ENCODE measurements at regions of chr17 and their contacts with region 1.

Region 1: GRCh38 chr17:7021993-7022778 is 664 bp upstream of the BCL6B start:
- DNase-seq: peak; percentile 87
- ATAC-seq: peak; percentile 77
- H3K4me3 Mint-ChIP-seq: peak overlapping the region; percentile 82
- H3K27ac Mint-ChIP-seq: peak overlapping the region; percentile 85
- H3K4me1 Mint-ChIP-seq: peaks cover 27% of the 10 kb centered on the region
- H3K27me3 Mint-ChIP-seq: no peaks in the 10 kb centered on the region
- CTCF ChIP-seq: peak; percentile 63

Region 2: DNA sequence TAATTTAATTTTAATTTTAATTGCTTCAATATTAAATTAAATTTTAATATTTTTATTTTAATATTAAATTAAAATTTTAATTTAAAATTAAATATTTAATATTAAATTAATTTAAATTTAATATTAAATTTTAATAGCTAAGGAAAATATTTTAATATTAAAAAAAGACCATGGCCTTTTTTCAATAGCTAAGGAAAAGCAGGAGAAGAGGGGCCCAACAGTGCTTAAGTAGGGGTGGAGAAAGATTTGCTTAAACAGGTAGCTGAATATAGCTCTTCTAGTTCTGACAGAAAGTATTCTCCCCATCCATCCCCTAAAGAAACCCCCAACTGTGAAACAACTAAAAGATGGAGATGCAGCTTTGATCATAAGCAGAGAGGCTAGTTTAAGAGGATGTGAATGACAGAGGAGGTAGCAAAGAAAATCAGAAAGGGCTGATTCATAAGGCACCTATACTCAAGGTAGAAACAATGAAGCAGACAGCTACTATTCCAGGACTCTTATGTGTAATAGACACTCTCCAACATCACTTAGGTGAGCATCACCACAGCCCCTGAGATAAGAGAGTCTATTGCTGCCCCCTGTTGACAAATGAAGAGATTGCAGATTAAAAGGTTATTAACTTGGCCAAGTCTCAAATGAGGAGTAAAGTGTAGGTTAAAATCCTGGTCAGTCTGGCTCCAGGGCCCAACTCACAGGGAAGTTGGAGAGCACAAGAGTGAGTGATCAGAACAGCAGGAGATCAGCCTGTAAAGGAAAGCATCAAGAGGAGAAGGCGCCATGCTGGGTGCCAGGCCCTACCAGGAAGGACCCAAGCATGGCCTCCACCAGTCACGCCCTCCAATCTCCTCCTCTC is 17.6 kb before region 1 on chr17:
- CTCF ChIA-PET with region 1: interaction called, 33 read pairs
- POLR2A ChIA-PET with region 1: interaction called, 7 read pairs
- intact Hi-C with region 1: loop called (anchors 1 kb)
- DNase-seq: no peak
- ATAC-seq: peak; percentile 95
- H3K4me3 Mint-ChIP-seq: no peak overlapping the region
- H3K27ac Mint-ChIP-seq: peak overlapping the region; percentile 54
- H3K4me1 Mint-ChIP-seq: peaks cover 22% of the 10 kb centered on the region
- H3K27me3 Mint-ChIP-seq: no peaks in the 10 kb centered on the region
- CTCF ChIP-seq: peak; percentile 50

Region 3: DNA sequence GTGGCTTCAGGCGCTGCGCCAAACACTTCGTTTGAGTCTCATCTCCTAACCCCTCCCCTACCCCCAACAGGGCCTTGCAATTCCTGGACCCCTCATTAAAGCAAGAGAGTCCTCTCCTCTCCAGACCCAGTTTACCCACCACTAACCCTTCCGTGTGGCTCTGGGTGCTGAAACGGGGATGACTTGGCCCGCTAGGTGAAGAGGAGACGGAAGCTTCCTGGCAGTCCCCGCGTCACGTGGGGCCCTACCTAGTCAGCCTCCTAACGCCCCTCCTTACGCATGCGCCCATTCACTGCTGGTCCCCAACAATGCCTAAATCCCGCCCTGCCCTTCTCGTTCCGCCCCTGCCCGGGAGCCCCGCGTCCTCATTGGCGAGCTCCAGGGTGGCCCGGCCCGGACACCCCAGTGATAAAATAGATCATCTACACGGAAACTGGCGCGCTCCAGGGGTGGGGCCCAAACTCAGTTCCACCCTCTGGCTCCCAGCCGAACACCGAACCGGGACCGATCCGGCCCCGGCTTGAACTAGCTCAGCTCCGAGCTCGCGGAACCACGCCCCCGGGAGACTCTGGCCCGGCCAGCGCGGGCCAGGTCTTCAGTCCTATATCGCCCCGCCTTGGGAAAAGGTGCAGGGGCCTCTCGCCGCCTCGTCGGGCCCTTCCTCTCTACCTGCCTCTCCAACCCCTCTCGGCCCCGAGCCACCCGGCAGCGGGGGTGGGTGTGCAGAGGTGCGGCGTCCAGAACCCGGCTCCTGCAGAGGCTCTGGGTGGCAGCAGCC is 13.6 kb after region 1 on chr17 and contains the start of gene SLC16A13:
- CTCF ChIA-PET with region 1: interaction called, 5 read pairs
- POLR2A ChIA-PET with region 1: interaction called, 112 read pairs
- intact Hi-C with region 1: loop called (anchors 1 kb)
- DNase-seq: peak; percentile 92
- ATAC-seq: peak; percentile 95
- H3K4me3 Mint-ChIP-seq: peak within 1 kb of the TSS; percentile 94
- H3K27ac Mint-ChIP-seq: peak within 1 kb of the TSS; percentile 98
- H3K4me1 Mint-ChIP-seq: peaks cover 42% of the 10 kb centered on the region
- H3K27me3 Mint-ChIP-seq: no peaks in the 10 kb centered on the region
- CTCF ChIP-seq: no peak
- total RNA-seq, gene SLC16A13: 10.4 and 11.8 TPM in 2 replicates